PC-9 (cell line): ENCODE measurements at regions of chr15 and their contacts with region 1.

Region 1: GRCh38 chr15:60745469-60746061 is 266.6 kb upstream of the ICE2 start:
- DNase-seq: no peak
- H3K4me3 ChIP-seq: no peak overlapping the region
- H3K27ac ChIP-seq: no peak overlapping the region
- H3K4me1 ChIP-seq: no peaks in the 10 kb centered on the region
- H3K27me3 ChIP-seq: no peaks in the 10 kb centered on the region
- CTCF ChIP-seq: no peak

Region 2: GRCh38 chr15:60700437-60700836 is 45.1 kb before region 1 on chr15:
- CTCF ChIA-PET with region 1: no interaction called
- POLR2A ChIA-PET with region 1: interaction called, 34 read pairs
- intact Hi-C with region 1: no loop called
- DNase-seq: no peak
- H3K4me3 ChIP-seq: no peak overlapping the region
- H3K27ac ChIP-seq: no peak overlapping the region
- H3K4me1 ChIP-seq: no peaks in the 10 kb centered on the region
- H3K27me3 ChIP-seq: no peaks in the 10 kb centered on the region
- CTCF ChIP-seq: no peak

Region 3: DNA sequence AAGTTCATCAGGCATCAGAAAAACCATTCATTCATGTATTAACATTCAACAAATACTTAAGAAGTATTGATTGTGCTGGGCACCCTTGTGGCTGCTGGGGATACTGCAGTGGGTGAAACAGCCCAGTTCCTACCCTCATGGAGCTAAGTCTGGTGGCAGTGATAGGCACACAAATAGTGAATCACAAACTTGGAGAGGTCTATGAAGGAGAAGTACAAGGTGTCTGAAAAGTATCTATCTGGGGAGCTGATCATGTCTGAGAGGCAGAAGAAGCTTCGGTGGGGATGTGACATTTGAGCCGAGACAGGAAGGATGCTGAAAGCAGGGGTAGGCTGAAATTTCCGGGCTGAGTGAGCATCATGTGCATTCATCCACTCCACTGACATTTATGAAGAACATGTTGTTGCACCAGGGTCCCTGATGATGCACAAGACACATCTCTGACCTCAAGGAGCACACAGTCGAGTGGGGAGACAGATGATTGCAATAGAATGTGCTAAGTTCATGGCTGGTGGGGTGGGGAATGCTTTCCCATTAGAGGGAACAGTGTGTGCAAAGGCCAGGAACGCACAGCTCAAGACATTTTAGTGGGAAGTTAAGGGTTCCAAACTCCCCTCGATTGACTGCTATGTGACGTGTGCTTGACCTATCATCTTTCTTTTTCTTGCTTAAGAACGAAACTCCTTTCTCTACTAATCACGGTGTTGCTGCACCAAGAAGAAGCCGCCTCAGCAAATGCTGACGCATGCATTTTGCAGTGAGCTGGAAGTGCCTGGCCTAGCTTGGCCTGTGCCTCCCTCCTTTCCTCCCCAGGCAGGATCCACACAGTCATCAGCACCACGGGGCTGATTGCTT is 42.5 kb after region 1 on chr15:
- CTCF ChIA-PET with region 1: no interaction called
- POLR2A ChIA-PET with region 1: no interaction called
- intact Hi-C with region 1: no loop called
- DNase-seq: no peak
- H3K4me3 ChIP-seq: no peak overlapping the region
- H3K27ac ChIP-seq: no peak overlapping the region
- H3K4me1 ChIP-seq: no peaks in the 10 kb centered on the region
- H3K27me3 ChIP-seq: no peaks in the 10 kb centered on the region
- CTCF ChIP-seq: no peak; the same call in 1 of the 2 replicates